ENCODE measurements at regions of chr6 and their contacts with region 1.

Region 1: DNA sequence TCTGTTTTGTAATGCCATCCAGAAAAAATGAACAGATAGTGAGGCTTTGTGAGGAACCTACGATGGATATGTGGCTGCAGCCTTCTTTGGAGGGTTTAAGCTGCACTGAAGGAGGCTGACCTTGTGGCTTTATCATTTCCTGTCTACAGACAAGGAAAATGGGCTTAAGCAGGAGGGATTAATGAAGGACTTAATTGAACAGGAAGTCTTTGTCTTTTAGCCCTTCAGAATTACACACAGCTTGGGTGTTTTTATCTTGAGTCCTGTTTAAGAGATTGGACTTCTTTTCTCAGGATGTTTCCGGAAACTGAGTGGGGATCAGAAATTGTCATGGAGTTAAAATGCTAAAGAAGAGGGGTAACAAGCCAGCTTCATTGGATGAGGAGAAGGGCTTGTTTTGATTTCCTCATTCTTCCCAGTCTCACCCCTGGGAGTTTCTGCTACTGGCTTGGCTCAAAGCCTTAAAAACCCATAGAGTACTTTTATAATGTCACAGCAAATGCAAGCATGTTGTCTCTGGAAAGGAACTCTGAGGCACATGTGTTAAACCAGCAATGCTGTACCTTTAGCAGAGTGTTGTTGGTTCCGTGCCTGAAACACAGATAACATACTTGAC is 193.6 kb downstream of the JARID2 start:
- DNase-seq: peak; percentile 98
- H3K4me3 ChIP-seq: no peak overlapping the region
- H3K27ac ChIP-seq: peak overlapping the region; percentile 20
- H3K4me1 ChIP-seq: peaks cover 81% of the 10 kb centered on the region
- H3K27me3 ChIP-seq: peaks cover 20% of the 10 kb centered on the region
- CTCF ChIP-seq: no peak

Region 2: GRCh38 chr6:15245361-15246216 is 193.9 kb before region 1 on chr6 and contains the start of gene JARID2:
- CTCF ChIA-PET with region 1: no interaction called
- POLR2A ChIA-PET with region 1: no interaction called
- intact Hi-C with region 1: loop called (anchors 1 kb)
- DNase-seq: peak; percentile 99
- H3K4me3 ChIP-seq: peak within 1 kb of the TSS; percentile 71
- H3K27ac ChIP-seq: peak within 1 kb of the TSS; percentile 96
- H3K4me1 ChIP-seq: peaks cover 18% of the 10 kb centered on the region
- H3K27me3 ChIP-seq: no peaks in the 10 kb centered on the region
- CTCF ChIP-seq: no peak
- total RNA-seq, gene JARID2: 29.4 and 34.1 TPM in 2 replicates

Region 3: DNA sequence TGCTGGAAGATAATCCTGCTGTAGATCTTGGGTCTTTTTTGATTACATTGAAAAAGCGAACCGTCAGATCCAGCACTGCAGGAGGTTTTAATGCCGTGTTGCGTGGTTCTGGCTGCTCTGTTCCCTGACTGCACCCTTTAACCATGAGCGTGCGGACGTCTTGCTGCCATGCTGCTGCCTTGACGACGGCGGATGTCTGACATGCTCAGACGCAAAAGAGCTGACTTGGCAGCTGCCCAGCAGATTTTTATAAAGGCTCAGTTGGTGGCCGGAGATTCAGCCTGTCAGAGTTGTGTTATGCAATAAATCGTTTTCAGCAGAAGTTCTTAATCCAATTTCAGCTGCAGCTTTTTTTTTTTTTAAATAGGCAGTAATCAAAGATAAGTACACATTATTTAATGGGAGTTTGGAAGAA is 74.2 kb before region 1 on chr6:
- CTCF ChIA-PET with region 1: interaction called, 3 read pairs
- POLR2A ChIA-PET with region 1: no interaction called
- intact Hi-C with region 1: loop called (anchors 2 kb)
- DNase-seq: peak; percentile 98
- H3K4me3 ChIP-seq: peak overlapping the region; percentile 13
- H3K27ac ChIP-seq: no peak overlapping the region
- H3K4me1 ChIP-seq: peaks cover 76% of the 10 kb centered on the region
- H3K27me3 ChIP-seq: no peaks in the 10 kb centered on the region
- CTCF ChIP-seq: no peak

Region 4: DNA sequence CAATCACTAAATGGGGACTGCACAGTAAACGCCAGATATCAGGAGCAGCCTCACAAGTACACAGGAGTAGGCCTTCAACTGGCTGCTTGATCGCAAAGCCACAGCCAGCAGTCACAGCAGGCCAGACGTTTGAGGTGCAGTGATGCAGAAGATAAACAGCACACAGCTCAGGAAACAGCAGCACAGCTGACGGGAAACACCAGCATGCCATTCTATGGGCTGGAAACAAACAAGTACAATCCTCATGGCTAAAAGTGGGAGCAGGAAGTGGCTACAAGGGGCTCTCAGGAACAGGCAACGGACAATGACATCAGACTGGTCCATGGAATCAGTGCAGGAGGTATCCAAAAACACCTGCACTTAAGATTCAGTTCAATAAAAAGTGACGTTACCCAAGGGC is 112.3 kb after region 1 on chr6:
- CTCF ChIA-PET with region 1: no interaction called
- POLR2A ChIA-PET with region 1: no interaction called
- intact Hi-C with region 1: no loop called
- DNase-seq: peak; percentile 75
- H3K4me3 ChIP-seq: no peak overlapping the region
- H3K27ac ChIP-seq: no peak overlapping the region
- H3K4me1 ChIP-seq: peaks cover 60% of the 10 kb centered on the region
- H3K27me3 ChIP-seq: no peaks in the 10 kb centered on the region
- CTCF ChIP-seq: no peak